Adrenal gland (tissue), 19 donors: ENCODE measurements at regions of chr2 and their contacts with region 1.

Region 1: DNA sequence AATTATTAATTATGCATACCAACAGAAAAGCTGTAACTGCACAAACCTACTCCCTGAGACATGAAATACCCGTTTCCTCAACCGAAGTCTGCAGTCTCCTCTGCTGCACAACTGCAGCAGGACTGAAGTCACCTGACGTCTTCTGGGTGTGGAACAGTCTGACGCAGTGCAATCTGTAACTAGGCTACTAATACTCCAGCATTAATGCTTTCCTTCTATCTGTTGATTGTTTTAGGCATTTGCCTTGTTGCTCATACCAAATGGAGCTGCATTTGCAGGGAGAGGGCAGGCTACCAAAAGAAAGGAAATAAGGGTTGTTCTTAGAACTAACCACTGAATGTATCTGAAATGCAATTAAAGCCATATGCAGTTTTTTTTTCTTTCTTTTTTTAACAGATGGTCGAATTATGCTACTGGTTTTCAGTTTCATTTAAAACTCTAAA is 40.1 kb downstream of the RTN4 start:
- DNase-seq: peak; percentile 52 to 80 (median 61)
- H3K4me3 ChIP-seq: peak overlapping the region in 2 of 4 donors; percentile 32 to 47
- H3K27ac ChIP-seq: peak overlapping the region in 4 of 5 donors; percentile 4 to 57 (median 27)
- H3K4me1 ChIP-seq: peaks cover 53 to 93% of the 10 kb centered on the region in 2 donors
- H3K27me3 ChIP-seq: no peaks in the 10 kb centered on the region
- CTCF ChIP-seq: no peak
- POLR2A ChIP-seq: peak in 1 of 2 donors; percentile 58

Region 2: GRCh38 chr2:55168221-55169154 is 158.3 kb after region 1 on chr2:
- intact Hi-C with region 1: loop called in 1 of 2 experiments (anchors 10 kb)
- DNase-seq: peak; percentile 46 to 85 (median 64)
- H3K4me3 ChIP-seq: no peak overlapping the region
- H3K27ac ChIP-seq: peak overlapping the region in 1 of 5 donors; percentile 20
- H3K4me1 ChIP-seq: peaks cover 0 to 16% of the 10 kb centered on the region in 2 donors
- H3K27me3 ChIP-seq: no peaks in the 10 kb centered on the region
- CTCF ChIP-seq: peak; percentile 32 to 90 (median 84)
- POLR2A ChIP-seq: no peak

Region 3: GRCh38 chr2:55196506-55196905 is 186.3 kb after region 1 on chr2:
- intact Hi-C with region 1: no loop called
- DNase-seq: no peak
- H3K4me3 ChIP-seq: no peak overlapping the region
- H3K27ac ChIP-seq: no peak overlapping the region
- H3K4me1 ChIP-seq: no peaks in the 10 kb centered on the region
- H3K27me3 ChIP-seq: no peaks in the 10 kb centered on the region
- CTCF ChIP-seq: no peak
- POLR2A ChIP-seq: no peak